ENCODE measurements at regions of chr6 and their contacts with region 1.

Region 1: GRCh38 chr6:33700391-33701050 is 11.0 kb downstream of the UQCC2 start:
- DNase-seq: peak; percentile 85
- ATAC-seq: peak; percentile 86
- H3K4me3 Mint-ChIP-seq: no peak overlapping the region
- H3K27ac Mint-ChIP-seq: peak overlapping the region; percentile 78
- H3K4me1 Mint-ChIP-seq: peaks cover 43% of the 10 kb centered on the region
- H3K27me3 Mint-ChIP-seq: no peaks in the 10 kb centered on the region

Region 2: GRCh38 chr6:33579828-33580714 is 120.5 kb before region 1 on chr6 and contains the start of gene BAK1:
- CTCF ChIA-PET with region 1: interaction called, 64 read pairs
- DNase-seq: peak; percentile 95
- ATAC-seq: peak; percentile 96
- H3K4me3 Mint-ChIP-seq: peak within 1 kb of the TSS; percentile 99
- H3K27ac Mint-ChIP-seq: peak within 1 kb of the TSS; percentile 97
- H3K4me1 Mint-ChIP-seq: peaks cover 39% of the 10 kb centered on the region
- H3K27me3 Mint-ChIP-seq: no peaks in the 10 kb centered on the region
- total RNA-seq, gene BAK1: 70.9 to 74.4 TPM

Region 3: DNA sequence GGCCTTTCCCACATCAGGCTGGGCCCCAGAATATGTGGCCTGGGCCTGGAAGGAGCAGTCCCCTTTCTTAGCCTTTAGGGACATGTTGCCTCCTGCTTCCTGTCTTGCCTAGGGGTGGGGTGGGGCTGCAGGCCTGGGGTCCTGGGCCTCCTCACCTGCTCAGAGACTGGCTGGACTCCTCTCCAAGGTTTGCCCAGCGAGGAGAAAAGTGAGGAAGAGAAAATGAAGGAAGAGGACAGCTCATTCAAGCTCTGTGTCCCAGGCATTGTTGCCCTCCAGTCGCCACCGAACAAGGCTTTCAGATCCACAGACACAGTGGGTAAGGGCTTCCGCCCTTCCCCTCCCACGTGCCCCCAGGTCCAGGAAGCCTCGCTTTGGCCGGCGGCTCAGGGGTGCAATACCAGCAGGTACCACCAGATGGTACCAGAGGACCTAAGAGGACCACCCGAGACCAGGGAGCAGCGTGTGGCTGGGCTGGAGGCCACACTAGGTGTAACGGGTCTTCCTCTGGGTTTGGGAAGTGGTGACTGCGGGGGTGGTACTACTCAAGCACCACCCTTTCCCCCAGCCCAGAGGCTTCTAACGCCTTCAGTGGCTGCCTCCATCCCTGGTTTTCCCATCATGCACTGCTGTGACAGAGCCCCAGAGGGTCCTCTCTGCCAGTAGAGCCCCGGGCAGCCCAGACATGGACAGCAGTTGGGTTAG is 115.0 kb before region 1 on chr6:
- CTCF ChIA-PET with region 1: interaction called, 64 read pairs
- DNase-seq: peak; percentile 96
- ATAC-seq: peak; percentile 89
- H3K4me3 Mint-ChIP-seq: peak overlapping the region; percentile 75
- H3K27ac Mint-ChIP-seq: peak overlapping the region; percentile 94
- H3K4me1 Mint-ChIP-seq: peaks cover 37% of the 10 kb centered on the region
- H3K27me3 Mint-ChIP-seq: no peaks in the 10 kb centered on the region

Region 4: DNA sequence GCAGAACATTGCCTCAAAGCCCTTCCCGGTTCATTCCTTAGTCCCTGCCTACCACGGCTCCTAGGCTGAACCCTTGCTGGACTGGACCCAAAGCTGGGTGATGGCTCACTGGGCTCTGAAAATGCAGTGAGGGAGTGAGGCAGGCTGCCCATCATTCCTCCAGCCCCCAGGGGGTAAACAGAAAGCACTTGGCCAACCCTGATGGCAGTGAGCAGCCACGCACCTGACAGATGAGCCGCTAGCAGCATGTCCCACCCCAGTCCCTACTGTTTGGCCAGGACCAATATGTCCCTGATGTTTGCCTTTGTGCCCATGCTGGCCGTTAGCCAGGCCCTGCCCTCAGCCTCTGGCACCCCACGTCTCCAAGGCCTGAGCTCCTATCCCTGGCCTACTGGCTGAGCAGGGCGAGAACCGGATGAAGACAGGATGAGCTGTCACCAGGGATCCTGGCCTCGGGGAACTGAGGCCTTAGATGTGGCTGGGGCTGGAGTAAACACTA is 101.1 kb before region 1 on chr6:
- CTCF ChIA-PET with region 1: interaction called, 10 read pairs
- DNase-seq: no peak
- ATAC-seq: no peak
- H3K4me3 Mint-ChIP-seq: no peak overlapping the region
- H3K27ac Mint-ChIP-seq: no peak overlapping the region
- H3K4me1 Mint-ChIP-seq: peaks cover 15% of the 10 kb centered on the region
- H3K27me3 Mint-ChIP-seq: peaks cover 18% of the 10 kb centered on the region

Region 5: DNA sequence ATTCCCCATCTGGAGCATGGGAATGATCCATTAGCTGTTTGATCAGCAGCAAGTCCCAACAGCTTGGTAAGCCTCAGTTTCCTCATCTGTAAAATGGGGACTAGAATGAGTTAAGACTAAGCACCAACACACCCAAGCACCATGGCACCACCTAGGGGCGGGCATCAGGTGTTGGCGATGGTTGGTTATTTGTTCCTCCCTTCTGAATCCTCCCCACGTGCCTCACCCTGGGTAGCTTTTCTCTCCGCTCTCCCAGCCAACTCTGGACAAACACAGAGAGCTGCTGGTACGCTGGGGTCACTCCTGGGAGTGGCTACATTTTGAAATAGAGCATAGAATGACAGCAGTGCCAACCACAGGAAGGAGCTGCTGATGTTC is 92.7 kb before region 1 on chr6:
- CTCF ChIA-PET with region 1: interaction called, 14 read pairs
- DNase-seq: peak; percentile 65
- ATAC-seq: peak; percentile 78
- H3K4me3 Mint-ChIP-seq: no peak overlapping the region
- H3K27ac Mint-ChIP-seq: no peak overlapping the region
- H3K4me1 Mint-ChIP-seq: peaks cover 2% of the 10 kb centered on the region
- H3K27me3 Mint-ChIP-seq: peaks cover 19% of the 10 kb centered on the region

Region 6: DNA sequence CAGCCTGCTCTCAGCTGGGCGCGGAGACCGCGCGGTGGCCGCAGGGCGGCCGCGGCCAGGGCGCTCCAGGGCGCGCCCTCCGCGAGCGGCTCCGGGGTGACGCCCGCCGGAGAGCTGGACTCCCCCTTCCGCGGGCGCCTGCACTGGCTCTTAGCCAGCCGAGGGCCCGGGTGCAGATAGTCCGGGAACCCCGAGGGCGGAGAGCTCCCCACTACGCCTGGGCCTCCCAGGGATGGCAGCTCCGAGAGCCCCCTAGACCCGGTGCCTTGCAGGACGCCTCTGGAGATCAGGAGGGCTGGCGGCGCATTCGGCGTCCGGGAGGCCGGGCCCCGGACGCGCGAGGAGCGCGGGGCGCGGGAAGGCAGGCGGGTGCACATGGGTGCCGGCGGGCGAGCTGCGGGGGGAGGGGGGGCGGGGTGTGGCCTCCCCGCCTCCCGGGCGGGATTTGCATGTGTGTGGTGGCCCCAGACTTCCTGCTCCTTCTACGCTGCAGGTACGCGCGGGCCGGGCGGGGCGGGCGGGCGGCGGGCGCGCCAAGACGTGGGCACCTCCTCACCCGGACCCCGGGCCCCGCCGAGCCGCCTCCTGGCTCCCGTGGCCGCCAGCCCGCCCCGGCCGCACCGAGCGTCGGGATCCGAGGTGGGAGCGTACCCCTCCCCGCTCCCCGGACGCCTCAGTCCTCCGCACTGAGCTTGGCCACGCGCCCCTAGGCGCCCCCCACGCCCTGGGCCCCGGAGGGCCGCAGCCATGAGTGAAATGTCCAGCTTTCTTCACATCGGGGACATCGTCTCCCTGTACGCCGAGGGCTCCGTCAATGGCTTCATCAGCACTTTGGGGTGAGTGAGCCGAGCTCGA is 79.4 kb before region 1 on chr6 and contains the start of gene ITPR3:
- CTCF ChIA-PET with region 1: interaction called, 15 read pairs
- DNase-seq: peak; percentile 86
- ATAC-seq: peak; percentile 88
- H3K4me3 Mint-ChIP-seq: peak within 1 kb of the TSS; percentile 90
- H3K27ac Mint-ChIP-seq: peak within 1 kb of the TSS; percentile 92
- H3K4me1 Mint-ChIP-seq: peaks cover 54% of the 10 kb centered on the region
- H3K27me3 Mint-ChIP-seq: peaks cover 2% of the 10 kb centered on the region
- total RNA-seq, gene ITPR3: 44.9 to 71.3 TPM

Region 7: DNA sequence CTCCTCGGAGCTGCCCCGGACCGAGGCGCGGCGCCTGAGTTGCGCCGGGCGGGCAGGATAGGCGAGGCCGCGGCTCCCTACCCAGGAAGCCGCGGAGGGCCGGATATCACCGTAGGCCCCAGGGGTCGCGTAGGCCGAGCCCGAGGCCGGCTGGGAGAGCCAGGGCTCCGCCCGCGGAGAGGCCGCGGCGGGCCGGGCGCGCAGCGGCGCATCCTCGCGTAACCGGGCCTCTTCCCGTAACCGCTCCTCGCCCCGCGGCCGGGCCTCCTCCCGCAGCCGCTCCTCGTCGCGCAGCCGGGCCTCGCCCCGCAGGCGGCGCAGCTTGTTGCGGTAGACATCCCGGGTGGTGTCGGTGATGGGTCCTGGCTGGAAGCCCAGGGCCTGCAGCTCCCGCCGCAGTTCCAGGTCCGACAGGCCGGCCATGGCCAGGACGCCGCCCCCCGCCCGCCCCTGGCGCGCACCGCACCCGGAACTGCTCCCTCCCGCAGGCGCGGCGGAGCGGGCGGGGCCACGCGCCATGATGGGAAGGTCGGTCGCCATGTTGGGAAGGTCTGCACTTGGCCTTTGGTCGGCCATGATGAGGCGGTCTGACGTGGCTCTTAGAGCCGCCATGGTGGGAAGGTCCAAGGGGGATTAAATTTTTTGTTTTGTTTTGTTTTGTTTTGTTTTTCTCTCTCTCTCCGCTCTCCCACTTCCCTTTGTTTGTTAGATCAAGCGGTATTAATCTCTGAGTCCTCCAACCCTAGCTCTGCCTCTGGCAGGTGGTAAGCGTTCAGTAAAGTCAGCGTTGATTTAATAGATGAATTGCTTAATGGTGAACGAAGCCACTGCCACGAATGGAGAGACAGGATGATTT is 88.4 kb after region 1 on chr6 and contains the start of gene LEMD2:
- CTCF ChIA-PET with region 1: no interaction called
- DNase-seq: peak; percentile 94
- ATAC-seq: peak; percentile 88
- H3K4me3 Mint-ChIP-seq: peak within 1 kb of the TSS; percentile 89
- H3K27ac Mint-ChIP-seq: peak within 1 kb of the TSS; percentile 90
- H3K4me1 Mint-ChIP-seq: peaks cover 45% of the 10 kb centered on the region
- H3K27me3 Mint-ChIP-seq: peaks cover 8% of the 10 kb centered on the region
- total RNA-seq, gene LEMD2: 64.9 to 80.3 TPM

Region 8: GRCh38 chr6:33827546-33828451 is 127.3 kb after region 1 on chr6:
- CTCF ChIA-PET with region 1: no interaction called
- DNase-seq: no peak
- ATAC-seq: no peak
- H3K4me3 Mint-ChIP-seq: no peak overlapping the region
- H3K27ac Mint-ChIP-seq: no peak overlapping the region
- H3K4me1 Mint-ChIP-seq: no peaks in the 10 kb centered on the region
- H3K27me3 Mint-ChIP-seq: peaks cover 34% of the 10 kb centered on the region

Measured in activated CD8-positive, alpha-beta memory T cell treated with anti-CD3 and anti-CD28 coated beads, Interleukin-2, amount 10 ng/mL, durations not matched to agents 7 days and 5 days (primary cell).